Sciatic nerve (tissue), 2 donors: ENCODE measurements at regions of chr3 and their contacts with region 1.

Region 1: DNA sequence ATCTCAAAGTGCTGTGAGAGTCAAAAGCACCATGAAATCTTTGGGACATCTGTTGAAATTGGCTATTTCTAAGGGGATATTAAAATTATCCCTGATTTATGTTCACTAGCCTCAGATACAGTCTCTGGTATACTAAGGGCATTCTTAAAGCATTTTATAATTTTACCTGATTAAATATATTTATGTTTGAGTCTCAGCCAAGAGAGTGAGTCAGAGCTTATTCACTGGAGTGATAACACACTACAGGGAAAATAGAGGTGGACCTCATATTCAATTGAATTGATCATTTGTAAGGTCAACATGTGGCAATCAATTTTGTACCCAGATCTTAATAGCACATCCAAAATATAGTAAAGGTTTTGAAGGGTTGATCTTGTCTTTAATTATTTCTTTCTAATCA is 733.6 kb downstream of the EPHA3 start:
- DNase-seq: no peak
- ATAC-seq: no peak

Region 2: GRCh38 chr3:89335693-89336092 is 505.3 kb before region 1 on chr3:
- intact Hi-C with region 1: loop called (anchors 5 kb)
- DNase-seq: no peak
- ATAC-seq: no peak